ENCODE measurements at regions of chr21 and their contacts with region 1.

Region 1: DNA sequence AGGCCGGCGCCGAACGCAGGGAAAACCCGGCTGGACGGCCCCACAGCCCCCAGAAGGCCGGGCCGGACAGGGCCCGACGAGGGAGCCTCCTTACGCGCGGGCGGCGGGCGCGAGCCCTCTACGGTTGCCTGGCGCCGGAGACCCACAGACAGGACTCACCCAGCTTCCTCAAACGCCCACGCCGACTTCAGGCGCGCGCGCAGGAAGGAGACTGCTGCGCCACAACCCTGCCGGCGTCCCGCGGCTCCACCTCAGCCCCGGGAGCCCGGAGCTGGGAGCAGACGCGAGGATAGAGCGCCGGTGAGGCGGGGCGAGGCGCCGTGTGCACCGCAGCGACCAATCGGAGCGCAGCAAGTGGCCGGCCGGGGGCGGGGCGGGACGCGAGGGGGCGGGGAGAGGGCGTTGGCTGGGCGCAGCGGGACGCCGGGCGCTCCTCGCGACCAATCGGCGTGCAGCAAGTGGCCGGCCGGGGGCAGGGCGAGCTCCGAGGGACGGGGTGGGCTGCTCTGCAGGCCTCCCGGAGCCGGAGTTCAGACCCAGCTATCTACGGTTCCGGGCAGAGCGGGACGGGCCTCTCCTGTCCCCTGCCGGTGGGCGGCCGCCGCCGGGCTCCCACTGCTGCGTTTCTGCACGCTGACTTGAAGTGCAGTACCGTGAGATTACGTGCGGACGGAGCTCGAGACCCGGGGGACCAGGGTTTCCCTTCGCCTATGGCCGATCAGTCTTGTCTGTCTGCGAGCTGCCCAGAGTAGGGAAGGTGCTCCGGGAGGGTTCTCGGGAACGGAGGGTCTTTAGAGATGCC is at the start of gene TMEM50B:
- DNase-seq: peak; percentile 93
- H3K4me3 Mint-ChIP-seq: peak within 1 kb of the TSS; percentile 94
- H3K27ac Mint-ChIP-seq: peak within 1 kb of the TSS; percentile 88
- H3K4me1 Mint-ChIP-seq: peaks cover 8% of the 10 kb centered on the region
- H3K27me3 Mint-ChIP-seq: no peaks in the 10 kb centered on the region
- total RNA-seq, gene TMEM50B: 16.5 and 18.7 TPM in 2 replicates

Region 2: GRCh38 chr21:33360881-33361602 is 118.8 kb before region 1 on chr21:
- intact Hi-C with region 1: no loop called
- DNase-seq: peak; percentile 73
- H3K4me3 Mint-ChIP-seq: peak overlapping the region; percentile 67
- H3K27ac Mint-ChIP-seq: peak overlapping the region; percentile 66
- H3K4me1 Mint-ChIP-seq: peaks cover 18% of the 10 kb centered on the region
- H3K27me3 Mint-ChIP-seq: no peaks in the 10 kb centered on the region

Region 3: DNA sequence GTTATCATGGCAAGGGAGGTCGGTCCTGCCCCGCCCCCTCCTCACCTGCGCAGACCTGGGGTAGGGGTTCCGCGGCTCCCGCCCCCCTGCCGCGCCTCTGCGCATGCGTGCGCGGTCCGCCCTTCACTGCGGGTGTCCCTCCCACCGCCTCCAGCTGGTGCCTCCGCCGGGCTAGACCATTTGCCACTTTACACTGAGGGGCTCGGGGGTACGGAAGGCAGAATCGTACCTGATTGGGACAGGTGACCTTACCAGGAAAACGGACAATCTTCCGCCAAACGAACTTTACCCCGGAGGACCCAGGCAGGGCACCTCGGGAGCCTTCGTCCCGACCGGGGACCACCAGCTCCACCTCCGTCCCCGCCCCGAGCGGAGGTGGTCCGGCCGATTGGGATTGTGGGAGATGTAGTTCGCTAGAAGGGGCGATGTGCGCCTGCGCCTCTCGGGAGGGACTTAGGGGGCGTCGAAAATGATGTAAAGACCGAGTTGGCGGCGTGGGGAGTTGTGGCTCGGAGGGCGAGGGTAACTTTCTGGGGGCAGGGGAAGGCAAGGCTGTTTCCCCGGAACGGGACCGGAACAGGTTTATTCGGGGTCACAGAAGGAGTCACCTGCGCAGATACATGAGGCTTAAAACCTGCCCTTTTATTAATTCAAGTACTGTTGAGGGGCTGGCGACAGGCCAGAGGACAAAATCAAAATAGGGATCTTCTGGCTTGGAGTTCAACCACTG is 11.7 kb after region 1 on chr21 and contains the start of gene DNAJC28:
- intact Hi-C with region 1: loop called (anchors 1 kb)
- DNase-seq: peak; percentile 90
- H3K4me3 Mint-ChIP-seq: peak within 1 kb of the TSS; percentile 98
- H3K27ac Mint-ChIP-seq: peak within 1 kb of the TSS; percentile 94
- H3K4me1 Mint-ChIP-seq: peaks cover 9% of the 10 kb centered on the region
- H3K27me3 Mint-ChIP-seq: peaks cover 12% of the 10 kb centered on the region
- total RNA-seq, gene DNAJC28: 0.16 and 0.37 TPM in 2 replicates

Region 4: GRCh38 chr21:33588485-33589335 is 108.8 kb after region 1 on chr21 and contains the start of gene DONSON:
- intact Hi-C with region 1: loop called (anchors 5 kb)
- DNase-seq: peak; percentile 88
- H3K4me3 Mint-ChIP-seq: peak within 1 kb of the TSS; percentile 93
- H3K27ac Mint-ChIP-seq: peak within 1 kb of the TSS; percentile 80
- H3K4me1 Mint-ChIP-seq: peaks cover 23% of the 10 kb centered on the region
- H3K27me3 Mint-ChIP-seq: no peaks in the 10 kb centered on the region
- total RNA-seq, gene DONSON: 40.3 and 41.7 TPM in 2 replicates